CD8-positive, alpha-beta T cell (primary cell): ENCODE measurements at regions of chr4 and their contacts with region 1.

Region 1: DNA sequence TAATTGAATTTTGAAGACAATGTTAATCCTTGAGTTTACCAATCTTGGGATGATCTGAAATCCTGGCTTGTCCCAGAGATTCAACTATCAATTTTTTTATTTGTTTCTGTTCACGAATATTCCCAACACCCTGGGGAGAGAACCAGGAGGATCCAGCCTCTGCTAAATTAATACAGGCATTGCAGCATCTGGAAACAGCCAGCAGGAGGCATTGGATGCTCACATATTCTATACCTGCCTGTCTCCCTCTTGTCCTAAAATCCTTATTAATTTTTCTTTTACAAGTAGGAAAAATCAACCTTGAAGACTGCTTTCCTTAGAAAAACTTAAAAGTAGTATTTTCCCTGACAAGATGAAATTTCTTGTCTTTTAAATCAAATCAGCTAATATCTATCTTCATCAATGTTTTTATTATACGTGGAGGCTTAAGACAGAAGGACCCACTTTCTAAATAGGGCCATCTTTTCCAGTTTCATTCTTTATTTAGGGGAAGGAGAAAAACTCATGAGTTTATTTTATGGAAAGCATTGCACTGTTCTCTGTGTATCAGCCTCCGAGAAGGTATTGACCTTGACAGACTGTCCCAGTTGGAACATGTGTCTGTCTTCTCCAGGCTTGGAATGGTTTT is 102.4 kb downstream of the CLNK start:
- DNase-seq: peak in 4 of 9 experiments; percentile 20 to 56 (median 33)
- ATAC-seq: no peak
- H3K4me3 ChIP-seq: no peak overlapping the region
- H3K4me3 Mint-ChIP-seq: no peak overlapping the region
- H3K27ac ChIP-seq: no peak overlapping the region
- H3K27ac Mint-ChIP-seq: no peak overlapping the region
- H3K4me1 ChIP-seq: no peaks in the 10 kb centered on the region
- H3K4me1 Mint-ChIP-seq: peaks cover 6% of the 10 kb centered on the region
- H3K27me3 ChIP-seq: no peaks in the 10 kb centered on the region
- H3K27me3 Mint-ChIP-seq: no peaks in the 10 kb centered on the region
- CTCF ChIP-seq: peak; percentile 70

Region 2: GRCh38 chr4:10506077-10506476 is 76.1 kb before region 1 on chr4:
- CTCF ChIA-PET with region 1: no interaction called
- POLR2A ChIA-PET with region 1: no interaction called
- intact Hi-C with region 1: no loop called
- DNase-seq: no peak
- ATAC-seq: no peak
- H3K4me3 ChIP-seq: no peak overlapping the region
- H3K4me3 Mint-ChIP-seq: no peak overlapping the region
- H3K27ac ChIP-seq: no peak overlapping the region
- H3K27ac Mint-ChIP-seq: peak overlapping the region; percentile 29
- H3K4me1 ChIP-seq: no peaks in the 10 kb centered on the region
- H3K4me1 Mint-ChIP-seq: peaks cover 6% of the 10 kb centered on the region
- H3K27me3 ChIP-seq: no peaks in the 10 kb centered on the region
- H3K27me3 Mint-ChIP-seq: no peaks in the 10 kb centered on the region
- CTCF ChIP-seq: no peak

Region 3: GRCh38 chr4:10715696-10716095 is 133.5 kb after region 1 on chr4:
- CTCF ChIA-PET with region 1: no interaction called
- POLR2A ChIA-PET with region 1: no interaction called
- intact Hi-C with region 1: loop called in 1 of 2 experiments (anchors 5 kb)
- DNase-seq: no peak
- ATAC-seq: no peak
- H3K4me3 ChIP-seq: no peak overlapping the region
- H3K4me3 Mint-ChIP-seq: no peak overlapping the region
- H3K27ac ChIP-seq: no peak overlapping the region
- H3K27ac Mint-ChIP-seq: no peak overlapping the region
- H3K4me1 ChIP-seq: no peaks in the 10 kb centered on the region
- H3K4me1 Mint-ChIP-seq: no peaks in the 10 kb centered on the region
- H3K27me3 ChIP-seq: peaks cover 2 to 3% of the 10 kb centered on the region in 2 experiments
- H3K27me3 Mint-ChIP-seq: peaks cover 4% of the 10 kb centered on the region
- CTCF ChIP-seq: no peak

Region 4: GRCh38 chr4:10893395-10893794 is 311.2 kb after region 1 on chr4:
- CTCF ChIA-PET with region 1: no interaction called
- POLR2A ChIA-PET with region 1: no interaction called
- intact Hi-C with region 1: loop called in 1 of 2 experiments (anchors 10 kb)
- DNase-seq: peak in 1 of 9 experiments; percentile 10
- ATAC-seq: no peak
- H3K4me3 ChIP-seq: no peak overlapping the region
- H3K4me3 Mint-ChIP-seq: no peak overlapping the region
- H3K27ac ChIP-seq: no peak overlapping the region
- H3K27ac Mint-ChIP-seq: no peak overlapping the region
- H3K4me1 ChIP-seq: no peaks in the 10 kb centered on the region
- H3K4me1 Mint-ChIP-seq: no peaks in the 10 kb centered on the region
- H3K27me3 ChIP-seq: no peaks in the 10 kb centered on the region
- H3K27me3 Mint-ChIP-seq: no peaks in the 10 kb centered on the region
- CTCF ChIP-seq: no peak

Region 5: GRCh38 chr4:11424000-11424399 is 841.8 kb after region 1 on chr4:
- CTCF ChIA-PET with region 1: interaction called, 10 read pairs
- POLR2A ChIA-PET with region 1: no interaction called
- intact Hi-C with region 1: loop called in 1 of 2 experiments (anchors 2 kb)
- DNase-seq: peak in 4 of 9 experiments; percentile 15 to 51 (median 36)
- ATAC-seq: no peak
- H3K4me3 ChIP-seq: no peak overlapping the region
- H3K4me3 Mint-ChIP-seq: no peak overlapping the region
- H3K27ac ChIP-seq: no peak overlapping the region
- H3K27ac Mint-ChIP-seq: no peak overlapping the region
- H3K4me1 ChIP-seq: peaks cover 9% of the 10 kb centered on the region
- H3K4me1 Mint-ChIP-seq: peaks cover 13% of the 10 kb centered on the region
- H3K27me3 ChIP-seq: peaks cover 7 to 13% of the 10 kb centered on the region in 2 experiments
- H3K27me3 Mint-ChIP-seq: peaks cover 15% of the 10 kb centered on the region
- CTCF ChIP-seq: peak; percentile 38

Region 6: GRCh38 chr4:11720292-11720691 is 1138.1 kb after region 1 on chr4:
- CTCF ChIA-PET with region 1: no interaction called
- POLR2A ChIA-PET with region 1: no interaction called
- intact Hi-C with region 1: loop called in 1 of 2 experiments (anchors 5 kb)
- DNase-seq: peak in 1 of 9 experiments; percentile 7
- ATAC-seq: no peak
- H3K4me3 ChIP-seq: no peak overlapping the region
- H3K4me3 Mint-ChIP-seq: no peak overlapping the region
- H3K27ac ChIP-seq: no peak overlapping the region
- H3K27ac Mint-ChIP-seq: no peak overlapping the region
- H3K4me1 ChIP-seq: no peaks in the 10 kb centered on the region
- H3K4me1 Mint-ChIP-seq: no peaks in the 10 kb centered on the region
- H3K27me3 ChIP-seq: no peaks in the 10 kb centered on the region
- H3K27me3 Mint-ChIP-seq: peaks cover 19% of the 10 kb centered on the region
- CTCF ChIP-seq: no peak